ENCODE measurements at regions of chr10 and their contacts with region 1.

Region 1: DNA sequence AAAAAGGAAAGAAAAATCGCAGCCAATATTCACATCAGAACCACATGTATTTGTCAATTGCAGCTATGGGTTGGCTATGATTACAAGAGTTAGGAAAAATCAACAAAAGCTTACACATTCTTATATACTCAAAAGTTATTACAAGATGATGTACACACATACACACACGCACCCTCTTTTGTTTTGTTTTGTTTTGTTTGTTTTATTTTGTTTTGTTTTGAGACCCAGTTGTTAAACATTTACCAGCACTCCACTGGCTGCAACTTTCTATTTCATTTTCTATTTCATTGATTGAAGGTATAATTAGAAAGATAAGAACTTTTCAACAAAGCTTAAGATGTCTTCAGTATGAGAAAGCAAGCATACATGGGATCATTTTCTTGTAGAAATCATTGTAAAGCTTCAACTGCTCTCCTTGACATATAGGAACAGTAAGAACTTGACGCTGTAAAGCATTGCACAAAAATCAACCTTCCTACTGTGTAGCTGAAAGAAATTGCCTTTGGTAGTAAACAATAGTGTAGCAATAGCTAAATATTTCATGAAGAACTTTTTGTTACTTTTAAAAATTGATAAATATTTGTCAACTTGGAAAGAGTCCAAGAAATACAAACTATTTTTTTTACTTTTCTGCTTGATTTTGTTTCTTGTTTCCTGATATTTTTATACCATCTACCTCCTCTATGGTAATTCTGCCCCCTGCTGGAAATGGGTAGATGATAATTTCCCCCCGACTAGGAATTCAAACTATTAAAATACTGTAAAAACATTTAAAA is 205.9 kb downstream of the MBL2 start:
- DNase-seq: no peak
- H3K4me3 ChIP-seq: no peak overlapping the region
- H3K27ac ChIP-seq: no peak overlapping the region
- H3K4me1 ChIP-seq: no peaks in the 10 kb centered on the region
- H3K27me3 ChIP-seq: no peaks in the 10 kb centered on the region
- CTCF ChIP-seq: peak in 2 of 3 experiments; percentile 18 to 24; a peak in 2 of 4 replicates
- EP300 ChIP-seq: no peak
- POLR2A ChIP-seq: no peak
- RAD21 ChIP-seq: peak; percentile 48 to 62

Region 2: GRCh38 chr10:52308251-52309031 is 258.2 kb before region 1 on chr10:
- CTCF ChIA-PET with region 1: interaction called, 38 read pairs
- POLR2A ChIA-PET with region 1: no interaction called
- DNase-seq: peak in 1 of 2 experiments; percentile 77
- H3K4me3 ChIP-seq: peak overlapping the region; percentile 46 to 67 (median 58)
- H3K27ac ChIP-seq: no peak overlapping the region
- H3K4me1 ChIP-seq: peaks cover 0 to 5% (median 3%) of the 10 kb centered on the region in 4 experiments; a peak in 4 of 7 replicates
- H3K27me3 ChIP-seq: peaks cover 37 to 51% (median 47%) of the 10 kb centered on the region in 4 experiments
- CTCF ChIP-seq: peak; percentile 58 to 74 (median 63)
- EP300 ChIP-seq: no peak
- POLR2A ChIP-seq: no peak
- RAD21 ChIP-seq: peak; percentile 85 to 92

Region 3: GRCh38 chr10:52652431-52653262 is 86.0 kb after region 1 on chr10:
- CTCF ChIA-PET with region 1: no interaction called
- POLR2A ChIA-PET with region 1: no interaction called
- DNase-seq: no peak
- H3K4me3 ChIP-seq: no peak overlapping the region
- H3K27ac ChIP-seq: no peak overlapping the region
- H3K4me1 ChIP-seq: no peaks in the 10 kb centered on the region
- H3K27me3 ChIP-seq: no peaks in the 10 kb centered on the region
- CTCF ChIP-seq: no peak
- EP300 ChIP-seq: no peak
- POLR2A ChIP-seq: no peak
- RAD21 ChIP-seq: no peak

Region 4: DNA sequence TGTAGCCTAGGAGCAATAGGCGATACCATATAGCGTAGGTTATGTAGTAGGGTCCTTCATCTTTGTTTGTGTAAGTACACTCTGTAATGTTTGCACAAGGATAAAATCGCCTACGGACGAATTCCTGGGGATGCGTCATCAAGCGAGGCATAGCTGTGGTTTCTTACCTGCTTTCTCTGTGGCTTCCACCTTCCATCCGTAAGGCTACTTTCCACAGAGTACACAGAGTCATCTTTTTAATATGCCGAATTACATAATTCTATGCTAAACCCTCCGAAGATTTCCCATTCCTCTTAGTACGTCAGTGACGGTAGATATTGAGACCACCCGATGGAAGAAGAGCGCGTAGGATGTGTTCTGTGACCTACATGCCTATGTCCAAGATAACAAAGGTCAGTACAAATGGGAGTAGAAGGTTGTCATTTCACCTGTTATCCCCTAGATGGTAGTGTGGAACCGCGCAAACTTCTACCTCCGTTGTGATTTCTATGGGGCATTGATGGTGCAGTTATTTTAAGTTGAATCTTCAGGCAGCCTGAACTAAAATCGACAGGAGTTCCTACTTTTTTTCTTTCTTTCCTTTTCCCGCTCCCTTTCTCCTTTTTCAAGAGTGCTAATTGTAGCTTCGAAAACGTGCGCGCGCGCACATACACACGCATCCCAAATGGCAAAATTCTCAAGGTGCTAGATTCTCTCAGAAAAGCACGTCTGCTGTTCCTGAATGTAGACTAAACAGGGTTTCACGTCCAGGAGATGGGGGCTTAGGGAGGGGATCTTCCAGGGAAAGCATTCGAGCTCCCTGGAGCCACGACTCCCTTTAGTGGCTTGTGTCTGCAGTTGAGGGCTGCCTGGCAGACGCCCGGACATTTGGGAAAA is 317.6 kb after region 1 on chr10:
- CTCF ChIA-PET with region 1: no interaction called
- POLR2A ChIA-PET with region 1: no interaction called
- DNase-seq: peak; percentile 75 to 85
- H3K4me3 ChIP-seq: no peak overlapping the region
- H3K27ac ChIP-seq: peak overlapping the region; percentile 43
- H3K4me1 ChIP-seq: peaks cover 0 to 3% (median 0%) of the 10 kb centered on the region in 4 experiments; a peak in 1 of 7 replicates
- H3K27me3 ChIP-seq: no peaks in the 10 kb centered on the region
- CTCF ChIP-seq: peak in 2 of 3 experiments; percentile 64 to 82; a peak in 3 of 4 replicates
- EP300 ChIP-seq: no peak
- POLR2A ChIP-seq: no peak
- RAD21 ChIP-seq: peak; percentile 97

Measured in H1 (cell line).